Astrocyte of the cerebellum (primary cell): ENCODE measurements at regions of chr15 and their contacts with region 1.

Region 1: GRCh38 chr15:70627734-70628548 is 135.4 kb downstream of the UACA start:
- DNase-seq: peak; percentile 62
- H3K4me3 ChIP-seq: no peak overlapping the region
- CTCF ChIP-seq: no peak

Region 2: DNA sequence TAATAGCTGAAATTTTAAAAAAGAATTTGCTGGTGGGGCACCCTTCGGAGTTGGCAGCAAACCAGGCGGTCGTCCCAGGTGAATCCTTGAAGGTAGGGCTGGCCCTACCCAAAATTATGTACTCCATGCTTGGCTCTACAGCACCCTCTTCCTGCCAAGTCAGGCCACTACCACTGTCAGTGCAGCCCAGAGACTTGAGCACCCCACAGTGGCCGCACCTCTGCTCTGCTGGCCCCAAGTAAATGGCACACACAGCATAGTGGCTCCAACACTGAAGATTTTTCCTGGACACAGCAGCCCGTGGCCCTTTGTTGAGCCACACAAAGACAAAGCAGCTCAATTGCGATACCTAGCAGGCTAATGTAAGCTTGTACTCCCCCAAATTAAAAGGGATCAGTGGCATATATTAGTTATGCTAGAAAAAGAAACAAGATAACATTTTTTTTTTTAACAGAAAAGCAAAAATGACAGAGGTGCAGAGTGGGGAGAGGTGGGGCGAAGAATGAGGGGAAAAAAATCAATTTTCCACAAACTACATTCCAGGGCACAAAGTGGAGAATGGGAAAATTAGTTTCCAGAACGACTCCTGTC is 115.1 kb before region 1 on chr15:
- in situ Hi-C with region 1: no loop called
- DNase-seq: no peak
- H3K4me3 ChIP-seq: no peak overlapping the region
- CTCF ChIP-seq: peak; percentile 53

Region 3: GRCh38 chr15:70569091-70569621 is 58.8 kb before region 1 on chr15:
- in situ Hi-C with region 1: loop called (anchors 10 kb)
- DNase-seq: peak; percentile 60
- H3K4me3 ChIP-seq: no peak overlapping the region
- CTCF ChIP-seq: peak; percentile 82

Region 4: GRCh38 chr15:70584838-70585706 is 42.9 kb before region 1 on chr15:
- in situ Hi-C with region 1: loop called (anchors 5 kb)
- DNase-seq: no peak
- H3K4me3 ChIP-seq: peak overlapping the region; percentile 19
- CTCF ChIP-seq: peak; percentile 57

Region 5: GRCh38 chr15:70679919-70680231 is 51.9 kb after region 1 on chr15:
- in situ Hi-C with region 1: no loop called
- DNase-seq: no peak
- H3K4me3 ChIP-seq: no peak overlapping the region
- CTCF ChIP-seq: no peak